Heart right ventricle (tissue), 16 donors: ENCODE measurements at regions of chr2 and their contacts with region 1.

Region 1: GRCh38 chr2:118865106-118865505 is 17.7 kb upstream of the EN1 start:
- DNase-seq: peak in 1 of 2 donors; percentile 15
- ATAC-seq: peak in 7 of 8 donors; percentile 72 to 90 (median 77)
- H3K4me3 ChIP-seq: no peak overlapping the region
- H3K27ac ChIP-seq: no peak overlapping the region
- H3K4me1 ChIP-seq: no peaks in the 10 kb centered on the region
- H3K27me3 ChIP-seq: peaks cover 0 to 62% (median 38%) of the 10 kb centered on the region in 7 donors
- CTCF ChIP-seq: peak in 8 of 9 donors; percentile 24 to 70 (median 62)

Region 2: GRCh38 chr2:118032169-118033013 is 832.7 kb before region 1 on chr2:
- intact Hi-C with region 1: loop called in 2 of 10 experiments (anchors 2 to 5 kb)
- DNase-seq: no peak
- ATAC-seq: peak in 3 of 8 donors; percentile 34 to 57 (median 51)
- H3K4me3 ChIP-seq: no peak overlapping the region
- H3K27ac ChIP-seq: no peak overlapping the region
- H3K4me1 ChIP-seq: no peaks in the 10 kb centered on the region
- H3K27me3 ChIP-seq: peaks cover 0 to 54% (median 31%) of the 10 kb centered on the region in 7 donors
- CTCF ChIP-seq: peak; percentile 48 to 83 (median 76)

Region 3: GRCh38 chr2:118046634-118047210 is 818.4 kb before region 1 on chr2:
- intact Hi-C with region 1: loop called in 3 of 10 experiments (anchors 2 to 10 kb)
- DNase-seq: no peak
- ATAC-seq: no peak
- H3K4me3 ChIP-seq: no peak overlapping the region
- H3K27ac ChIP-seq: no peak overlapping the region
- H3K4me1 ChIP-seq: peaks cover 0 to 22% (median 0%) of the 10 kb centered on the region in 9 donors
- H3K27me3 ChIP-seq: peaks cover 0 to 82% (median 58%) of the 10 kb centered on the region in 7 donors
- CTCF ChIP-seq: peak in 8 of 9 donors; percentile 35 to 77 (median 64)

Region 4: GRCh38 chr2:118202707-118203303 is 662.3 kb before region 1 on chr2:
- intact Hi-C with region 1: loop called in 3 of 10 experiments (anchors 2 to 10 kb)
- DNase-seq: no peak
- ATAC-seq: peak in 4 of 8 donors; percentile 46 to 72 (median 56)
- H3K4me3 ChIP-seq: no peak overlapping the region
- H3K27ac ChIP-seq: no peak overlapping the region
- H3K4me1 ChIP-seq: no peaks in the 10 kb centered on the region
- H3K27me3 ChIP-seq: peaks cover 0 to 49% (median 38%) of the 10 kb centered on the region in 7 donors
- CTCF ChIP-seq: peak; percentile 47 to 79 (median 73)

Region 5: DNA sequence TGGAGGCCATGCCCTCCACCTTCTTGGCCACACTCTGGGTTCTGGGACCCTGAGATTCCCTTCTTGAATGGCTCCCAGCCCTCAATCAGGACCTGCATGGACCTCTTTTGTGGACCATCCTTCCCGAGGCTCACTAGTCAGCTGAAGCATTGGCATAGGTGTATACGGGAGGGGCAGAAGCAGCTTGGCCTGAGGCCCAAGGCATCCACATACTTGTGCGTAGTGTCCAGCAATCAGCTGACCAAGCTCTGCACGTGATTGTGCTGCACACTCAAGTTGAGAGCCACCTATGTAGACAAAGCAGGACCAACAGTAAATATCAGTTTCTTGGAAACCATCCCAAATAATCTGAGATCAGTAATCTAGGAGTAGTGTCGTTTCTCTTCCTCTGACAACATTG is 657.2 kb before region 1 on chr2:
- intact Hi-C with region 1: loop called in 4 of 10 experiments (anchors 2 to 10 kb)
- DNase-seq: no peak
- ATAC-seq: no peak
- H3K4me3 ChIP-seq: no peak overlapping the region
- H3K27ac ChIP-seq: no peak overlapping the region
- H3K4me1 ChIP-seq: no peaks in the 10 kb centered on the region
- H3K27me3 ChIP-seq: peaks cover 0 to 80% (median 66%) of the 10 kb centered on the region in 7 donors
- CTCF ChIP-seq: no peak

Region 6: GRCh38 chr2:118221666-118222594 is 643.2 kb before region 1 on chr2:
- intact Hi-C with region 1: loop called in 1 of 10 experiments (anchors 5 kb)
- DNase-seq: peak in 1 of 2 donors; percentile 21
- ATAC-seq: peak in 7 of 8 donors; percentile 55 to 79 (median 68)
- H3K4me3 ChIP-seq: no peak overlapping the region
- H3K27ac ChIP-seq: no peak overlapping the region
- H3K4me1 ChIP-seq: peaks cover 4 to 28% (median 14%) of the 10 kb centered on the region in 9 donors
- H3K27me3 ChIP-seq: peaks cover 8 to 100% (median 98%) of the 10 kb centered on the region in 7 donors
- CTCF ChIP-seq: peak; percentile 11 to 72 (median 59)

Region 7: DNA sequence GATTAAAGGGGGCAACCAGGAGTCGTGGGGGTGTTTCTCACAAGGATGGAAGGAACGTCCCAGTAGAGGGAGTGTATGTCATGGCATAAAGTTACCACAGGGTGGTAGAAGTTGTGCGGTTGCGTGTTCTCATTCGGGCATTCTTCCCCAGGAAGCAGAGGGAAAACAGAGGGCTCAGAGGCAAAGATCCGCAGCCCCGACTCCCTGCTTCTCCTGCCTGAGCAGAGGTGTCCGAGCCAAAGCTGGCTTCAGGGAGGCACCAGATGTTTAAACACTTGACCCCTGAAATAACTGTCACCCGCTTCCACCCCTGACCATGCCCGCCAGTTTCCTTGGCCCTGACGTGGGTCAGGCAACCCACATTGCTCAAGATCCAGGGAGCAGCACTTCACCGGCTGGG is 101.3 kb before region 1 on chr2:
- intact Hi-C with region 1: no loop called
- DNase-seq: no peak
- ATAC-seq: no peak
- H3K4me3 ChIP-seq: no peak overlapping the region
- H3K27ac ChIP-seq: no peak overlapping the region
- H3K4me1 ChIP-seq: no peaks in the 10 kb centered on the region
- H3K27me3 ChIP-seq: peaks cover 0 to 60% (median 42%) of the 10 kb centered on the region in 7 donors
- CTCF ChIP-seq: peak in 1 of 9 donors; percentile 9

Region 8: DNA sequence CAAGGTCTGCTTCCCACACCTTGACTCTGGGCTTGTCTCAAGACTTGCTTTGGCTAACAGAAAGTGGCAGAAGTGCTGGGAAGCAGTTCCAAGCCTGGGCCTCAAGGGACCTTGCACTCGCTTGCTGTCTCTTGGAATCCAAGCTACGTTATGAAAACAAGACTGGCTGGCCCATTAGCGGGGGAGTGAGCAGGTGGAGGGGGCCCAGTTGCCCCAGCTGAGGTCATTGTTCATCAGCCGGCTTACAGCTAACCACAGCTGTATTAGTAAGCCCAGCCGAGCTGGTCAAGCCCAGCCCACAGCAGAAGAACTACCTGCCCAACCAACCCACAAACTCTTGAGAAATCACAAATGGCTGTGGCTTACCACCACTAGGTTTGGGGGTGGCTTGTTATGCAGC is 139.9 kb after region 1 on chr2:
- intact Hi-C with region 1: no loop called
- DNase-seq: no peak
- ATAC-seq: no peak
- H3K4me3 ChIP-seq: no peak overlapping the region
- H3K27ac ChIP-seq: no peak overlapping the region
- H3K4me1 ChIP-seq: peaks cover 0 to 3% (median 0%) of the 10 kb centered on the region in 9 donors
- H3K27me3 ChIP-seq: peaks cover 0 to 26% (median 16%) of the 10 kb centered on the region in 7 donors
- CTCF ChIP-seq: no peak

Region 9: DNA sequence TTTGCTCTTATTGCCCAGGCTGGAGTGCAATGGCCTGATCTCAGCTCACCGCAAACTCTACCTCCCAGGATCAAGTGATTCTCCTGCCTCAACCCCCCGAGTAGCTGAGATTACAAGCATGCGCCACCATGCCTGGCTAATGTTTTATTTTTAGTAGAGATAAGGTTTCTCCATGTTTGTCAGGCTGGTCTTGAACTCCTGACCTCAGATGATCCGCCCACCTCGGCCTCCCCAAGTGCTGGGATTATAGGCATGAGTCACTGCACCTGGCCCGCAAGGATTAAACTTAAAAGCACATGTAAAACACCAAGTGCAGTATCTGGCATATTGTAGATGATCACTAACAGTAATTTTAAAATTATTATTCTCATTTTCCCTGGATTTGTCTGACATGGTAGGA is 220.5 kb after region 1 on chr2:
- intact Hi-C with region 1: no loop called
- DNase-seq: no peak
- ATAC-seq: no peak
- H3K4me3 ChIP-seq: no peak overlapping the region
- H3K27ac ChIP-seq: no peak overlapping the region
- H3K4me1 ChIP-seq: peaks cover 0 to 12% (median 0%) of the 10 kb centered on the region in 9 donors
- H3K27me3 ChIP-seq: no peaks in the 10 kb centered on the region
- CTCF ChIP-seq: no peak

Region 10: DNA sequence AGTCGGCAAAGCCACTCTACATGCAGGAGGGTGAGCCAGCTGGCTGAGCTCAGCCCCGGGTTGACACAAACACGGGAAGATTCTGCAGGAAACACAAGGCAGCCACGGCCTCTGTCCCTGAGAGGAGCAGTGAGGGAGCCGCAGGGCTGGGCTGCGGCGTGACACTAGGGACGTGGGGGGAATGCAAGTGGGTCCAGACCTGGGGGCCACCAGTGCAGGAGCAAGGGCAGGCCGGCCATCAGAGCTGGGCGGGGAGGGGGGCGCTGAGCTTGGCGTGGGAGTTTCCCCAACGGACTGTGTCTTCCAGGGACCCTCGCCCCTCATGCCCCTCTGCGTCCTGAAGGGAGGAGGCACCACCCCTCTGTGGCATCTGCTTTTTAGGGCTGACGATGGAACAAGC is 305.4 kb after region 1 on chr2:
- intact Hi-C with region 1: no loop called
- DNase-seq: no peak
- ATAC-seq: no peak
- H3K4me3 ChIP-seq: no peak overlapping the region
- H3K27ac ChIP-seq: no peak overlapping the region
- H3K4me1 ChIP-seq: no peaks in the 10 kb centered on the region
- H3K27me3 ChIP-seq: peaks cover 0 to 39% (median 12%) of the 10 kb centered on the region in 7 donors
- CTCF ChIP-seq: no peak